Psoas muscle (tissue), 8 donors: ENCODE measurements at regions of chr20 and their contacts with region 1.

Region 1: GRCh38 chr20:36439040-36439730 is 102.1 kb upstream of the MYL9 start:
- DNase-seq: peak; percentile 64 to 79
- ATAC-seq: peak; percentile 66 to 79 (median 74)
- H3K4me3 ChIP-seq: no peak overlapping the region
- H3K27ac ChIP-seq: no peak overlapping the region
- H3K4me1 ChIP-seq: no peaks in the 10 kb centered on the region
- H3K27me3 ChIP-seq: peaks cover 0 to 3% (median 0%) of the 10 kb centered on the region in 3 donors
- CTCF ChIP-seq: peak; percentile 90

Region 2: GRCh38 chr20:35994994-35995453 is 444.2 kb before region 1 on chr20:
- intact Hi-C with region 1: loop called in 1 of 2 experiments (anchors 10 kb)
- DNase-seq: peak; percentile 78 to 89
- ATAC-seq: peak; percentile 90 to 94 (median 92)
- H3K4me3 ChIP-seq: no peak overlapping the region
- H3K27ac ChIP-seq: no peak overlapping the region
- H3K4me1 ChIP-seq: peaks cover 3% of the 10 kb centered on the region
- H3K27me3 ChIP-seq: no peaks in the 10 kb centered on the region
- CTCF ChIP-seq: peak; percentile 88

Region 3: GRCh38 chr20:36154700-36155628 is 284.2 kb before region 1 on chr20 and contains the start of gene EPB41L1:
- intact Hi-C with region 1: loop called in 1 of 2 experiments (anchors 5 kb)
- DNase-seq: peak in 1 of 2 donors; percentile 24
- ATAC-seq: peak in 3 of 4 donors; percentile 3 to 8 (median 5)
- H3K4me3 ChIP-seq: peak within 1 kb of the TSS; percentile 72
- H3K27ac ChIP-seq: peak within 1 kb of the TSS; percentile 36
- H3K4me1 ChIP-seq: peaks cover 6% of the 10 kb centered on the region
- H3K27me3 ChIP-seq: no peaks in the 10 kb centered on the region
- CTCF ChIP-seq: no peak
- total RNA-seq, gene EPB41L1: 9.1 to 24.1 (median 9.9) TPM

Region 4: DNA sequence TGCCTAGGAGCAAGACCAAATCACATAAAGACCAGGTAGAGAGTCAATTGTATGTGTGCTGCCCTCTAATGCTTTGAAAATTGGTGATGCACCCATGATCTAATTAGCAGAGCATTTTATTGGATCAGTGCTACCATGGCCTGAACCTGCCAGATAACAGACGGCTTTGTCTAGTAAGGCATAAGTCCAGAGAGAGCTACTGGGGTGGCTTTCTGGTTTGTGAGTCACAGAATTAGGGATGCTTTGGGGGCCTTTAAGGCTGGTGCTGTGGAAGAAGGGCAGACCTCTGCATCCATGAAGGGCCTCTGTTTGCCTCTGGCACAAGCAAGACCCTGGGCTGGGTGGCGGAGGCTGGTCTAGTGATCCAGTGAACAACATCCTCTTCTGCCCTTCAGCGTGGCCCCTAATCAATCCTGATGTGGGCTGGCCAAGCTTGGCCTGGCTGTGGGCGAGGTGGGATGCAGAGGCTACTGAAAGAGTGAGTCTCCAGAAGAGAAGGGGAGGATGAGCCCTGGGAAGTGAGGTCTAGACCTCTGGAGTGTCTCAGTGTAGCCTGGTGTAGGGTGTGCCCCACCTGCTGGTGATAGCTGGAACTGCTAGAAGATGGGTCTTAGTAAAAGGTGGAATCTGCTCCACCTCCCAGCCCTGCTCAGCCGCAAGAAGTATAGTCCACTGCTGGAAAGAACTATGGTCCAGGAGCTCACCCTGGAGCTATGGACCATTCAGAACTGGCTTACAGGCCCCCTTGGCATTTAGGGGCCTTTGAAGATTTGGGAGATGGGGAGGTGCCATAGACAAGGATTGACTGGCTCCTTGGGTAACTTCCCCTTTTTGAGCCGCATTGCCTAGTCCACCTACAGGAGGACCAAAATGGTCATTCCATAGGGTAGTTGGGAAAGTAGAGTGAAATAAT is 239.6 kb before region 1 on chr20:
- intact Hi-C with region 1: loop called in 1 of 2 experiments (anchors 2 kb)
- DNase-seq: peak; percentile 75 to 81
- ATAC-seq: peak; percentile 84 to 92 (median 86)
- H3K4me3 ChIP-seq: no peak overlapping the region
- H3K27ac ChIP-seq: no peak overlapping the region
- H3K4me1 ChIP-seq: no peaks in the 10 kb centered on the region
- H3K27me3 ChIP-seq: no peaks in the 10 kb centered on the region
- CTCF ChIP-seq: peak; percentile 94

Region 5: DNA sequence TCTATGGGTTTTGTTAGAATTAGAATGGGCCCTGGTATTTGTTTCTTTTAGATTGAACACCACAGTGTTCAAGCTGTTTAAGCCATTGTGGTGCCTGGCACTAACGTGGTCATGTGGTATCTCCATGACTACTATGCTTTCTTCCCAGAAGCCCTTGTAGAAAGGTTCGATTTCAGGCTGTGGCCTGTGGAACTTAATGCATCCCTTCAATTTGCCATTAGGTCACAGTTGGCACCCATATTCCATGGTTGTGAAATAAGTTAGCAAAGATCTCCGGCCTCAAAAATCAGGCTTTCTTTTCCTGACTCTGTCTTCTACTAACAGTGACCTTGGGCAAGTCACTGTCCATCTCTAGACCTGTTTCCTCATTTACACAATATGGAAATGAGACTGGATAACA is 234.2 kb before region 1 on chr20:
- intact Hi-C with region 1: loop called (anchors 2 to 5 kb)
- DNase-seq: no peak
- ATAC-seq: no peak
- H3K4me3 ChIP-seq: no peak overlapping the region
- H3K27ac ChIP-seq: no peak overlapping the region
- H3K4me1 ChIP-seq: no peaks in the 10 kb centered on the region
- H3K27me3 ChIP-seq: peaks cover 0 to 13% (median 0%) of the 10 kb centered on the region in 3 donors
- CTCF ChIP-seq: no peak

Region 6: GRCh38 chr20:36214684-36215256 is 224.4 kb before region 1 on chr20:
- intact Hi-C with region 1: loop called in 1 of 2 experiments (anchors 5 kb)
- DNase-seq: no peak
- ATAC-seq: peak in 2 of 4 donors; percentile 54 to 69
- H3K4me3 ChIP-seq: no peak overlapping the region
- H3K27ac ChIP-seq: no peak overlapping the region
- H3K4me1 ChIP-seq: no peaks in the 10 kb centered on the region
- H3K27me3 ChIP-seq: no peaks in the 10 kb centered on the region
- CTCF ChIP-seq: peak; percentile 48

Region 7: GRCh38 chr20:36273414-36274180 is 165.6 kb before region 1 on chr20:
- intact Hi-C with region 1: loop called in 1 of 2 experiments (anchors 10 kb)
- DNase-seq: peak in 1 of 2 donors; percentile 27
- ATAC-seq: no peak
- H3K4me3 ChIP-seq: no peak overlapping the region
- H3K27ac ChIP-seq: no peak overlapping the region
- H3K4me1 ChIP-seq: no peaks in the 10 kb centered on the region
- H3K27me3 ChIP-seq: peaks cover 0 to 32% (median 5%) of the 10 kb centered on the region in 3 donors
- CTCF ChIP-seq: peak; percentile 23